ENCODE measurements at regions of chr1 and their contacts with region 1.

Region 1: DNA sequence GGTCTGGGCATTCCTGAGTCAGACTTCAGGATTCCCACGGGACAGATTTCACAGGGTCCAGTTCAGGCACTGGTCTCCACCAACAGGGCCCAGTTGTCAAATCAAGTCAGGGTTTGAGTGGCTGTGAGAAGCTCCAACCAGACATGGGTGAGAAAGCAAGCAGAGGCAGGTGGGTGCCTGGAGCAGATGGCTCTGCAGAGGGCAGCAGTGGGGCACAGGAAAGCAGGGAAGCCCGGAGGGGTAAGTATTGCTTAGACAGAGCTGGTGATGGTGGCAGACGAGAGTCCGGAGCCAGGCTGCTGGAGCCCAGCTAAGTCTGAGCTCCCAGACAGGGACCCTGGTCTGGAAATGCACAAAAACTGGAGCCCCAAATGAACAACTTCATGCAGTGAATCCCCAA is 40.4 kb downstream of the RIMS3 start:
- DNase-seq: peak; percentile 49
- ATAC-seq: peak; percentile 83

Region 2: GRCh38 chr1:40132383-40133311 is 492.4 kb before region 1 on chr1:
- intact Hi-C with region 1: no loop called
- DNase-seq: no peak
- ATAC-seq: no peak

Region 3: GRCh38 chr1:40385437-40386358 is 239.4 kb before region 1 on chr1:
- intact Hi-C with region 1: no loop called
- DNase-seq: no peak
- ATAC-seq: peak; percentile 44

Region 4: DNA sequence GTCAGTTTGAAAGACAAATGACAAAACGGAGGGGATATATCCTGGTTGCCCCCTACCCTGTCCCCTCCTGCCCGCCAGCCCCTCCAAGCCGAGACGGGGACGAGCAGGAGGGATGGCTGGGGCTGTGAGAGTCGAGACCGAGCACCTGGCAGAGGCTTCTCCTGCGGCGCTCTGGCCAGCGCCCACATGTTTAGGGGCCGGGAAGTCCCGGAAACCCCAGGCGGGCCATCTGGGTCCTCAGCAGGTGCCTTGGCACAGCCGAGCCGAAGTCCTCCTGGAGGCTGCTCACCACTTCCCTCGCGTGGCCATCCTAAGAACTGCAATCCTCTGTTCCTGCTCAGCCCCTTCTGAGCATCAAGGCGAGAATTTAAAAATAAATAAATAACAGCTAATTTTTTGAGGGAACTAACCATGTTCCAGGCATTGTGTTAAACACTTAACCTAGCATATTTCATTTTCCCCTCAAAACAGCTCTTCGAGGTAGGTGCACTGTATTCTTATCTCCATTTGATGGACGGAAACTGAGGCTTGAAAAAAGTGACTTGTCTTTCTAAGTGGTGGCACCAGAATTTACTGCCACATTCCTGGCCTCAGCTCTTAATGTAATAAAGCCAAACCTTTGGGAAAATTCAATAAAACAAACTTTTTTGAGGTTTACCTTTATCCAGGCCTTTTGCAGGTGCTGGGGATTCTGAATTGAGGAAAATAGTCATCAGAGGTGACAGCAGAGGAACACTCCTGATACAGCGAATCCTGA is 43.9 kb after region 1 on chr1:
- intact Hi-C with region 1: loop called (anchors 5 kb)
- DNase-seq: peak; percentile 83
- ATAC-seq: peak; percentile 67